ENCODE measurements at regions of chr17 and their contacts with region 1.

Region 1: DNA sequence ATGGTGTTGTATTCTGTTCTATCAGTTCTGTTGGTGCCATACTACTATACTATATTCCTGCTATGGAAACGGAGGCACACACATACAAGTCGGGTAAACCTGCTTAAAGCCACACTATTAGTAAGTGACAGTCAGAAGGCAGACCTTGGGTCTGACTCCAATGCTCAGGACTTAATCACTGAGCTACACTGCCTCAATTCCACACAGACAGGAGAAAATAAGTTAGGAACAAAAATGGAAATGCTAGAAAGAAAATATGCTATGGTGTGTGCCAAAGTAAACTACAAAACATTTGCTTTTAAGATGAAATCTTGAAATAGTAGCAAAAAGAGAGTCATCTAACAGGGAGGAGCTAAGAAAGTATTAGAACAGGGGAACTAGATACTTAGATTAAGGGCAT is 48.1 kb downstream of the MYO1D start:
- DNase-seq: no peak
- ATAC-seq: no peak
- H3K4me3 ChIP-seq: no peak overlapping the region
- H3K27ac ChIP-seq: peak overlapping the region; percentile 82 to 94
- H3K4me1 ChIP-seq: peaks cover 6 to 8% of the 10 kb centered on the region in 2 donors
- H3K27me3 ChIP-seq: no peaks in the 10 kb centered on the region

Region 2: DNA sequence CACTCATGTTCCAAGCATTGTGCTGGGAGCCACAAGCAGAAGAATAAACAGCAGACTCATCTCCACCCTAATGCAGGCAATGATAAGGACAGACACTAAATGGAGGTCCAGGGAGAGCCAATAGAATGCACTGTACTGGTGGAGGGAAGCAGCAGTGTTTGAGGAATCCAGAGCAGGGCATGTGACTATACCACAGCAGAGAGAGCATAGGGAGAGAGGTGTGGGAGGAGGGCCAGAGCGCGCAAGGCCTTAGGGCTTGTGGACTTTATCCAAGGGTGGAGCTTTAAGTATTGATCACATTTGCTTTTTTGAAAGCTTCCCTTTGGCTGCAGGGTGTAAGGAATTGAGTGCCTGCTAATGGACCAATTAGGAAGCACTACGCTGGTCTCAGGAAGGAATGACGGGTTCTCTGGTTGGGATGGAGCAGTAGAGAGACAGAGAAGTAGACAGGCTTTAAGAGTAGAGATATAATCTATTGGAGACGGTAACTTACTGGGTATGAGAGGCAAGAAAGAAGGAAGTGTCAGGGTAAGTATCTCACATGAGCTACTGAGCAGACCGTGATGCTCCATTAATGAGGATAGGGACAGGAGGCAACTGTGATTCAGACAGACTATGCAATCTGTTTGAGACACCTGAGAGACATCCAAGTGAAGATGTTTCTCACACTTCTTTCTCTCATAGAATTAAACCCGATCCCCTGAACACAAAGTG is 34.1 kb before region 1 on chr17:
- intact Hi-C with region 1: no loop called
- DNase-seq: no peak
- ATAC-seq: no peak
- H3K4me3 ChIP-seq: no peak overlapping the region
- H3K27ac ChIP-seq: no peak overlapping the region
- H3K4me1 ChIP-seq: peaks cover 7 to 10% of the 10 kb centered on the region in 2 donors
- H3K27me3 ChIP-seq: no peaks in the 10 kb centered on the region

Region 3: GRCh38 chr17:32870027-32870670 is 41.3 kb after region 1 on chr17:
- intact Hi-C with region 1: loop called (anchors 2 to 5 kb)
- DNase-seq: peak in 1 of 2 donors; percentile 60
- ATAC-seq: peak; percentile 80
- H3K4me3 ChIP-seq: no peak overlapping the region
- H3K27ac ChIP-seq: peak overlapping the region; percentile 39 to 96
- H3K4me1 ChIP-seq: peaks cover 3 to 23% of the 10 kb centered on the region in 2 donors
- H3K27me3 ChIP-seq: no peaks in the 10 kb centered on the region